Left lung (tissue), 14 donors: ENCODE measurements at regions of chr3 and their contacts with region 1.

Region 1: DNA sequence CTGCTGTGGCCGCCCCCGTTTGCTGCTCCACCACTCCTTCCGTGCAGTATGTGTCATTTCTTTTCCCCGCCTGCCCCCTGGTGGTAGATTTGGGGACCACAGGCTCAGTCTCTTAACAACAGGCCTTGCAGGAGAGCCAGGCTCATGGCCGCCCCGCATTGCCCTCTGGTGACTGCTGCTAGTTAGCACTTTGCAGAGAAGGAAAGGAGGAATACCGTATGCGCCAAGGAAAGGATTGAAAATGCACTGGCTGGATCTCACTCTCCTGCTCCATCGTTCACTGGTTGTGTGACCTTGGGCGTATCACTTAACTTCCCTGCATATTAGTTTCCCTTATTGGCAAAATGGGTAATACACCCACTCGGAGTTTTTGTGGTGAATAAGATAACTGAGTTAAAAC is 39.3 kb upstream of the PXYLP1 start:
- DNase-seq: peak; percentile 93 to 97 (median 96)
- ATAC-seq: peak; percentile 100
- H3K4me3 ChIP-seq: no peak overlapping the region
- H3K27ac ChIP-seq: no peak overlapping the region
- H3K4me1 ChIP-seq: peaks cover 0 to 6% of the 10 kb centered on the region in 2 donors
- H3K27me3 ChIP-seq: peaks cover 0 to 18% of the 10 kb centered on the region in 2 donors
- CTCF ChIP-seq: peak; percentile 98 to 99

Region 2: DNA sequence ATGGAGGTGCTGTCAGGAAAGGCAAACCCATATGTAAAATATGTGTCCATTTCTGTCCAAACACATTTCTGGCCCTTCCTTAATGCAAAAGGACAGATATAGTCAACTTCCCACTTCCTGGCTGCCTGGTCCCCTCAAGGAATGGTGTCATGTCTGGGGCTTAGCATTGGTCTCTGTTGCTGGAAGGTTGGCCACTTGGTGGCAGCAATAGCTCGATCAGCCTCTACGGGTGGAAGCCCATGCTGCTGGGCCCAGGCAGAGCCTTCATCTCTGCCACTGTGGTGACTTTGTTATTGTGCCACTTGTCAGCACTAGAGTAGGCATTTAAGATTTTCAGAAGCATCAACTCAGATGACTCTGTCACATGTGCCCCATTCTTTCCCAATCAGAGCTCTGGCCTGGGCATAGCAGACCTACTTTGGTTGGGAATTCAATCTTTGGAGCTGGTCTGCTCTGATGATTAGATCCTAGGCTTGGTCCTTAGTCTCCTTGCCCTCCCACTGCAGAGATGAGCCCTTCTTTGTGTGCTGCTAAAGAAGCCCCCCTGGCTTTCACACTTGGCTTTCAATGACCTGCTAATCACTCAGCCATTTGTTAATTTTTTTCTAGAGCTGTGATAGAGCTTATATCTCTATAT is 192.2 kb before region 1 on chr3:
- intact Hi-C with region 1: loop called in 1 of 2 experiments (anchors 5 kb)
- DNase-seq: peak in 3 of 4 donors; percentile 51 to 76 (median 61)
- ATAC-seq: peak; percentile 98
- H3K4me3 ChIP-seq: no peak overlapping the region
- H3K27ac ChIP-seq: no peak overlapping the region
- H3K4me1 ChIP-seq: no peaks in the 10 kb centered on the region
- H3K27me3 ChIP-seq: no peaks in the 10 kb centered on the region
- CTCF ChIP-seq: peak; percentile 56 to 65